PC-9 (cell line): ENCODE measurements at regions of chr14 and their contacts with region 1.

Region 1: GRCh38 chr14:61568572-61569131 is 126.7 kb upstream of the HIF1A start:
- DNase-seq: peak; percentile 73 to 75
- H3K4me3 ChIP-seq: peak overlapping the region; percentile 48
- H3K27ac ChIP-seq: peak overlapping the region; percentile 98
- H3K4me1 ChIP-seq: peaks cover 97% of the 10 kb centered on the region
- H3K27me3 ChIP-seq: no peaks in the 10 kb centered on the region
- CTCF ChIP-seq: no peak; the same call in 1 of the 2 replicates

Region 2: DNA sequence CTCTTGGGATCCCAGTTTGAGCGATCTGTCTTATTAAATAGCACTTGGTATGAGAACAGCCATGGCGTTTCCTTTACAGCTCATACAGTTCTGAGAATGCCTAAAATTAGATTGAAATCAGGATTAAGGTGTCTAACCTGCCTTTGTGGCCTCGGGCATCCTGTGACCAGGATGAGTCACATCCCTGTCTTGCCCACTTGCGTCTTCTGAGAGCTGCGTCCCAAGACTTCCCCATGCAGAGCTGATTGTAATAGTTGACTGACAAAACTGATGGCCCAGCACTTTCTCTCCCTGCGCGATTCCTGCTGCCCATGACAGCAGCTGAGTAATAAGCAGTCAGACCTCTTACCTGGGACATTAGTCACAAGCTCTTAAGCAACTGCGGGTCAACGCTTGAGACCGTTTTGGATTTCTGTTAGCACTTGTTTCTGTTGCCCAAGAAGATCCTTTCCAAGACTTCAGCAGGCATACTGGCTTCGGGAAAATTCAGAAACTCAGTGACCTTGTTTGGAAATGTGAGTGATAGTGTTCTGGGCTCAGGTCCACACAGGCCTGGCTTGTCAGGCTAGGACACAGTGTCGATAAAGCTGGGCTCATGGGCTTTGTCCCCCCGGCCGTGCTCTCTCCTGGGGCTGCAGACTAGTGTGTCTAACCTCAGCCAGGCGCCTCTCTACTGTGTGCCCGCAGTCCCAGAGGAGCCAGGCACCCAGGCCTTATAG is 43.2 kb before region 1 on chr14:
- CTCF ChIA-PET with region 1: no interaction called
- POLR2A ChIA-PET with region 1: no interaction called
- intact Hi-C with region 1: no loop called
- DNase-seq: peak; percentile 94 to 100
- H3K4me3 ChIP-seq: peak overlapping the region; percentile 32; the same call in 1 of the 2 replicates
- H3K27ac ChIP-seq: peak overlapping the region; percentile 98
- H3K4me1 ChIP-seq: peaks cover 69% of the 10 kb centered on the region
- H3K27me3 ChIP-seq: no peaks in the 10 kb centered on the region
- CTCF ChIP-seq: no peak

Region 3: GRCh38 chr14:61584331-61584741 is 15.7 kb after region 1 on chr14:
- CTCF ChIA-PET with region 1: interaction called, 11 read pairs
- POLR2A ChIA-PET with region 1: interaction called, 6 read pairs
- intact Hi-C with region 1: no loop called
- DNase-seq: peak in 1 of 2 experiments; percentile 39
- H3K4me3 ChIP-seq: no peak overlapping the region
- H3K27ac ChIP-seq: no peak overlapping the region
- H3K4me1 ChIP-seq: peaks cover 9% of the 10 kb centered on the region; the same call in 1 of the 2 replicates
- H3K27me3 ChIP-seq: no peaks in the 10 kb centered on the region
- CTCF ChIP-seq: no peak

Region 4: DNA sequence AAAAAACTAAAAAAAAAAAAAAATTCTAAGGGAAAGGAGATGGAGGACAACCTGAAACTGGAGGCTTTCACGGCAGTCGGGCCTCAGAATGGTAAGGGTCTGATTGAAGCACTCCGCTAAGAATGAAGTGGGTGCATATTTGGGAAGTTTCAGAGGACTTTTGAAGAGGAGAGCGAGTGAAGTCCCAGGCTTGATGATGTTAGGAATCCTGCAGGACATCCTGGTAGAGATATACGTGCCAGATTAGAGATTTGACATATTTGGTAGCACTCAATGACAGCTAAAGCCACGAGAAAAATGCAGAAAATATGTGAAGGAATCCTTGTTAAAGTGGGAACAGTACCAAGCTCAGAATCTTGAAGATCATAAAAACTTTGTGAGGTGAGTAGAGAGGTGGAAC is 379.8 kb after region 1 on chr14:
- CTCF ChIA-PET with region 1: no interaction called
- POLR2A ChIA-PET with region 1: interaction called, 22 read pairs
- intact Hi-C with region 1: no loop called
- DNase-seq: no peak
- H3K4me3 ChIP-seq: no peak overlapping the region
- H3K27ac ChIP-seq: no peak overlapping the region
- H3K4me1 ChIP-seq: no peaks in the 10 kb centered on the region; the same call in 1 of the 2 replicates
- H3K27me3 ChIP-seq: no peaks in the 10 kb centered on the region
- CTCF ChIP-seq: no peak

Region 5: GRCh38 chr14:62428429-62429203 is 860.0 kb after region 1 on chr14:
- CTCF ChIA-PET with region 1: no interaction called
- POLR2A ChIA-PET with region 1: no interaction called
- intact Hi-C with region 1: no loop called
- DNase-seq: peak; percentile 21 to 54
- H3K4me3 ChIP-seq: no peak overlapping the region
- H3K27ac ChIP-seq: peak overlapping the region; percentile 18; the same call in 1 of the 2 replicates
- H3K4me1 ChIP-seq: 0 out of 2 replicates have a peak, but pooled peaks cover 6% of the 10 kb centered on the region
- H3K27me3 ChIP-seq: no peaks in the 10 kb centered on the region
- CTCF ChIP-seq: no peak